Left lung (tissue), 14 donors: ENCODE measurements at regions of chr2 and their contacts with region 1.

Region 1: GRCh38 chr2:42494355-42495233 is 812 bp upstream of the KCNG3 start:
- DNase-seq: peak; percentile 71 to 86 (median 80)
- ATAC-seq: peak; percentile 85
- H3K4me3 ChIP-seq: peak overlapping the region; percentile 43 to 58
- H3K27ac ChIP-seq: peak overlapping the region; percentile 51 to 55
- H3K4me1 ChIP-seq: peaks cover 0 to 22% of the 10 kb centered on the region in 2 donors
- H3K27me3 ChIP-seq: peaks cover 24 to 74% of the 10 kb centered on the region in 2 donors
- CTCF ChIP-seq: peak; percentile 76 to 83

Region 2: GRCh38 chr2:42663106-42663780 is 168.6 kb after region 1 on chr2:
- intact Hi-C with region 1: loop called in 1 of 2 experiments (anchors 5 kb)
- DNase-seq: peak in 3 of 4 donors; percentile 60 to 85 (median 68)
- ATAC-seq: peak; percentile 98
- H3K4me3 ChIP-seq: no peak overlapping the region
- H3K27ac ChIP-seq: peak overlapping the region in 1 of 2 donors; percentile 62
- H3K4me1 ChIP-seq: peaks cover 0 to 17% of the 10 kb centered on the region in 2 donors
- H3K27me3 ChIP-seq: no peaks in the 10 kb centered on the region
- CTCF ChIP-seq: peak; percentile 76 to 97